ENCODE measurements at regions of chr1 and their contacts with region 1.

Region 1: GRCh38 chr1:18883636-18884418 is 18.5 kb downstream of the ALDH4A1 start:
- DNase-seq: no peak
- H3K4me3 ChIP-seq: no peak overlapping the region
- CTCF ChIP-seq: peak; percentile 97

Region 2: GRCh38 chr1:18972531-18972930 is 88.7 kb after region 1 on chr1:
- CTCF ChIA-PET with region 1: interaction called, 10 read pairs
- POLR2A ChIA-PET with region 1: no interaction called
- DNase-seq: no peak
- H3K4me3 ChIP-seq: no peak overlapping the region
- CTCF ChIP-seq: no peak

Region 3: DNA sequence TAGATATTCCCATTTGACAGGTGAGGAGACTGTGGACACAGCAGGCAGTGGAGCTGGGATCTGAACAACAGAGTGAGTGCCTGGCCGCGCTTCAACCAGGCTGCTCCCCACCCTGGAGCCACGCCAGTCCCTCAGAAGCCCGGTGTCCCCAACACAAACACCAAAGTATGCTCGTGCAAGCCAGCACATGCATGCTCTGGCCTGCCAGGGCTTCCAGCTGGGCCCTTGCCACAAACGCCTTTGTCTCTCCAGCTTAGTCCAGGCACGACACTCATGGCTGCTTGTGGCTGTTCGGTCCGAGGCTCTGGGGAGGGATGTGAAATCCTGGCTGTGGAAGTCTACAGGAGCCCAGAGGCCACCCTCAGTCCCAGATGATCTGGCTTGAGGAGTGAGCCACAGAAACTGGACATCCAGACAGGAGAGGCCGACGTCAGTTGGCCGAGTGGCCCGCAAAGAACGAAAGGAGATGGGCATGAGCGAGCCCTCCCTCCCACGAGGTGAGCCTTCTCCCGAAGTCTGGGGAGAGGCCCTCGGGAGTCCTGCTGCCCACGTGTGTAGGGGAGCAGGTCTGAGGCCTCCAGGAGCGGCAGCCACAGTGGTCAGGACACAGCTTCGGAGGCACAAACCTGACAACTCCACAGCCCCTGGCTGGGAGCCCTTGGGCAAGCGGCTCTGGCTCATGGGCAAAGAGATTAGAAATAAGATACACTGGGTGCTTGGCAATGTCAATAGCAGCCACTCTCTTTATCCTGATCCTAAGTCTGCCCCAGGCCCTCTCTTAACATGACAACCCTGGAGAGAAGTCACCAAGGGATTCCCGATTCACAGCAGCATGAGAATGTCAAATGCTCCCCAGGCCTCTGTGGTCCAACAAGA is 189.7 kb after region 1 on chr1:
- CTCF ChIA-PET with region 1: interaction called, 11 read pairs
- POLR2A ChIA-PET with region 1: no interaction called
- DNase-seq: no peak
- H3K4me3 ChIP-seq: no peak overlapping the region
- CTCF ChIP-seq: no peak

Region 4: DNA sequence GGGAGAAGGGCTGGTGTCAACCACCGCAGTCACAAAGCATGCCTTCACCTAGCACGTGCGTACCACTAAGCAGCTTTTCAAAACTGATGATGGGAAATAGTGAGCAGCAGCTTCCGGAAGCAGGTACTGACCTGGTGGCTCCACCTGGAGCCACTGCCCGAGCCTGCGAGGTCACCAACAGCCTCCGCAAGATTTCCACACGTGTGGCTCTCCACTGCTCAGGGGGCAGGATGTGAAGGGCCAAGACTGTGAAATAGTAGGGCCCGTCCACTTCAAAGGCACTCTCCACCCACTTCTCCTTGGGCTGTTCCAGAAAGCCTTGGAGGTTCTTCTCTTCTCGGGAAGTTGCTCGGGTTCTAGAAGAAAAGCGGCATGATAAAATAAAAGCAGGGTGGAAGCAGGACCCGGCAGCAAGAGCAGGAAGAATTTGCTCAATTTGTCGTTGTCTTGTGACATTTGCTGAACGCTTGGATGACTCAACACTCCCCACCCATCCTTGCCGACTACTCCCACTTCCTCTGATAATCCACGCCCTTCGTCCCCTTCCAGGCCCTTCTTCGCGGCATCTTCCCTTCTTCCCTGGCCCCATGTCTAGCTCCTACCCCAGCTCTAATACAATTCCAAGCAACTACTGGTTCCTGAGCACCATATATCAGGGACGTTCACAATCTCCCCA is 197.5 kb after region 1 on chr1:
- CTCF ChIA-PET with region 1: interaction called, 15 read pairs
- POLR2A ChIA-PET with region 1: no interaction called
- DNase-seq: no peak
- H3K4me3 ChIP-seq: no peak overlapping the region
- CTCF ChIP-seq: no peak

Region 5: DNA sequence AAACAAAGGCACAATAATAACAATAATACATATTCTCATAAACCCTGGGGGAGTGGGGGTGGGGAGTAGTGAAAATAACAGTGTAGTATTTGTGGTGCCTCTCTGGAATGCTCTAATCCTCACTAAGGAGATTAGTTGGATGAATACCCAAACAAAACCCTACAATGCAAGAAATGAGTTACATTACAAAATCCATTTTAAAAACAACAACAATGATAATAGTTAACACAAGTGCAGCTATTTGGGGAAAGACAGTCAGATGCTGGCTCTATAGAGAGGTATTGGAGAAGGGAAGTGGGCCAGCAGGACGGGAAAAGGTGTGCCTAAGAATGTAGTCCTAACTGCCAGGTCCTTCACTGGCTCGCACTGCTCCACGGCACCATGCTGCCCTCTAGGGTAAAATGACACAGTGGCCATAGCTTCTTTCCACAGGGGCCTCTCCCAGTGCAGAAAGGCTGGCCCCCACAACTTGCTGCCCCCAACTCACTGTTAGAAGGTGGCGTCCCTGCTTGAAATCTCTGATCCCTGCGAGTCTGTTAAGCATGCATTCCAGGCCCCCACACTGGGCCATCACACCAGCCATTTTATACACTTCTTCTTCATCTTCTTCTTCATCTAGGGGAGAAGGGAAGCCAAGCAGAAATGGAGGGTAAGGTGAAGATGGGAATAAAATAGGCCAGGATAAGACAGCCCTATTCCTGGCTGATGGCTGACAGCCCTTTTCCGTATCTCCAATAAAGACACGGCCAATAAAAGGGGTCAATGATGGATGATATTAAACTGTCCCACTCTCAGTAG is 212.4 kb after region 1 on chr1:
- CTCF ChIA-PET with region 1: interaction called, 21 read pairs
- POLR2A ChIA-PET with region 1: no interaction called
- DNase-seq: no peak
- H3K4me3 ChIP-seq: no peak overlapping the region
- CTCF ChIP-seq: peak; percentile 35

Region 6: GRCh38 chr1:19113697-19114092 is 229.9 kb after region 1 on chr1:
- CTCF ChIA-PET with region 1: interaction called, 21 read pairs
- POLR2A ChIA-PET with region 1: no interaction called
- DNase-seq: no peak
- H3K4me3 ChIP-seq: no peak overlapping the region
- CTCF ChIP-seq: peak; percentile 64